Panc1 (cell line): ENCODE measurements at regions of chr18 and their contacts with region 1.

Region 1: GRCh38 chr18:21194871-21195771 is 46.9 kb upstream of the GREB1L start:
- DNase-seq: no peak
- ATAC-seq: no peak
- H3K4me3 ChIP-seq: no peak overlapping the region
- H3K27ac ChIP-seq: no peak overlapping the region
- H3K4me1 ChIP-seq: no peaks in the 10 kb centered on the region
- H3K27me3 ChIP-seq: no peaks in the 10 kb centered on the region
- CTCF ChIP-seq: peak; percentile 61

Region 2: GRCh38 chr18:21444465-21445023 is 249.4 kb after region 1 on chr18:
- CTCF ChIA-PET with region 1: interaction called, 4 read pairs
- POLR2A ChIA-PET with region 1: interaction called, 6 read pairs
- in situ Hi-C with region 1: no loop called
- intact Hi-C with region 1: loop called (anchors 2 kb)
- DNase-seq: peak; percentile 36
- ATAC-seq: peak; percentile 84
- H3K4me3 ChIP-seq: no peak overlapping the region
- H3K27ac ChIP-seq: no peak overlapping the region
- H3K4me1 ChIP-seq: no peaks in the 10 kb centered on the region
- H3K27me3 ChIP-seq: no peaks in the 10 kb centered on the region
- CTCF ChIP-seq: peak; percentile 77